Activated CD4-positive, alpha-beta memory T cell treated with anti-CD3 and anti-CD28 coated beads for 36 hours (primary cell): ENCODE measurements at regions of chr2 and their contacts with region 1.

Region 1: GRCh38 chr2:135664623-135665068 is 77.0 kb upstream of the UBXN4 start:
- DNase-seq: no peak
- H3K4me3 Mint-ChIP-seq: no peak overlapping the region
- H3K27ac Mint-ChIP-seq: peak overlapping the region; percentile 14
- H3K4me1 Mint-ChIP-seq: peaks cover 20% of the 10 kb centered on the region
- H3K27me3 Mint-ChIP-seq: no peaks in the 10 kb centered on the region

Region 2: DNA sequence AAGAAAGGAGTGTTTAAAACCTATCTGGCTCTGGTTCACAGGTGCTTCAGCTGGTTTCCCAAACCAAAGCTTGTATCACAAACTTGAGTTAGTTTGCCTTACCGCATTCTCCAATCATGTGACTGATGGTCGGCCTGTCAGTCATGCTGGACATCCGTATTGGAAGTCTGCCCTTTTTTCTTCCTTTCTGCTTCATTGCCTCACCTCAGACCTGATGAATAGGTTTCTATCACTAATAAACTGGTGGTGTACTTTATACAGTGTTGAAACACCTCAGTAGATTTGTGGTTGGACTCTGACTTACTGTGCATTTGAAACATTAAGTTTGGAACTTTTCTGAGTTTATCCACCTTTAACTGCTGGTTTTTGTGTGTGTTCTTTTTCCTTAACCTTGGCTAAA is 49.2 kb before region 1 on chr2:
- CTCF ChIA-PET with region 1: no interaction called
- POLR2A ChIA-PET with region 1: no interaction called
- intact Hi-C with region 1: loop called (anchors 1 kb)
- DNase-seq: no peak
- H3K4me3 Mint-ChIP-seq: no peak overlapping the region
- H3K27ac Mint-ChIP-seq: no peak overlapping the region
- H3K4me1 Mint-ChIP-seq: peaks cover 7% of the 10 kb centered on the region
- H3K27me3 Mint-ChIP-seq: no peaks in the 10 kb centered on the region

Region 3: DNA sequence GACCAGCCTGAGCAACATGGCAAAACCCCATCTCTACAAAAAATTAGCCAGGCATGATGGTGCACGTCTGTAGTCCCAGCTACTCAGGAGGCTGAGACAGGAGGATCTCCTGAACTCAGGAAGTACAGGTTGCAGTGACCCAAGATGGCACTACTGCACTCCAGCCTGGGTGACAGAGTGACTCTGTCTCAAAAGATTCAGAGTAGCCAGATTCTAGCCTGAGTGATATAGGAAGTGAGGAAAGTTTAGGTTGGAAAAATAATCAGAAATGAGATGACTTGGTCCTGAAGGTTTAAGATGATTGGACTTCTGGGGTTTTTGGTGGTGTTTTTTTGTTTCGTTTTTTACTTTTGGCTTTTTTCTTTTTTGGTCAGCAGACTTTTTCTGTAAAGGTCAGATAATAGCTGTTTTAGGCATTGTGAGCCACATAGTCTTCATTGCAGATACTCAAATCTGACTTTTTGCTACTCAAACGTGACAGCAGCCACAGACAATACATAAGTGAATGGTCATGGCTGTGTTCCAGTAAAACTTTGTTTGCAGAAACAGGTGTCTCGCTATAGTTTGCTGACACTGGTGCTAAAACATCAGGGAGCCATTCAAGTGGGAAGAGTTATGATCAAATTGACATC is 27.1 kb before region 1 on chr2:
- CTCF ChIA-PET with region 1: no interaction called
- POLR2A ChIA-PET with region 1: no interaction called
- intact Hi-C with region 1: loop called (anchors 1 kb)
- DNase-seq: peak; percentile 20
- H3K4me3 Mint-ChIP-seq: no peak overlapping the region
- H3K27ac Mint-ChIP-seq: peak overlapping the region; percentile 24
- H3K4me1 Mint-ChIP-seq: peaks cover 12% of the 10 kb centered on the region
- H3K27me3 Mint-ChIP-seq: no peaks in the 10 kb centered on the region

Region 4: GRCh38 chr2:135676031-135676430 is 11.4 kb after region 1 on chr2:
- CTCF ChIA-PET with region 1: no interaction called
- POLR2A ChIA-PET with region 1: no interaction called
- intact Hi-C with region 1: no loop called
- DNase-seq: no peak
- H3K4me3 Mint-ChIP-seq: no peak overlapping the region
- H3K27ac Mint-ChIP-seq: no peak overlapping the region
- H3K4me1 Mint-ChIP-seq: no peaks in the 10 kb centered on the region
- H3K27me3 Mint-ChIP-seq: no peaks in the 10 kb centered on the region

Region 5: GRCh38 chr2:135741395-135742324 is 77.0 kb after region 1 on chr2 and contains the start of gene UBXN4:
- CTCF ChIA-PET with region 1: no interaction called
- POLR2A ChIA-PET with region 1: no interaction called
- intact Hi-C with region 1: loop called (anchors 5 kb)
- DNase-seq: peak; percentile 98
- H3K4me3 Mint-ChIP-seq: peak within 1 kb of the TSS; percentile 96
- H3K27ac Mint-ChIP-seq: peak within 1 kb of the TSS; percentile 99
- H3K4me1 Mint-ChIP-seq: peaks cover 24% of the 10 kb centered on the region
- H3K27me3 Mint-ChIP-seq: no peaks in the 10 kb centered on the region
- total RNA-seq, gene UBXN4: 107 TPM